Activated naive CD4-positive, alpha-beta T cell treated with anti-CD3 and anti-CD28 coated beads for 36 hours (primary cell): ENCODE measurements at regions of chr2 and their contacts with region 1.

Region 1: GRCh38 chr2:162318328-162319180 is at the start of gene IFIH1:
- DNase-seq: peak; percentile 88
- H3K4me3 Mint-ChIP-seq: peak within 1 kb of the TSS; percentile 94
- H3K27ac Mint-ChIP-seq: peak within 1 kb of the TSS; percentile 98
- H3K4me1 Mint-ChIP-seq: peaks cover 52% of the 10 kb centered on the region
- H3K27me3 Mint-ChIP-seq: no peaks in the 10 kb centered on the region
- total RNA-seq, gene IFIH1: 33.8 to 34.6 TPM

Region 2: DNA sequence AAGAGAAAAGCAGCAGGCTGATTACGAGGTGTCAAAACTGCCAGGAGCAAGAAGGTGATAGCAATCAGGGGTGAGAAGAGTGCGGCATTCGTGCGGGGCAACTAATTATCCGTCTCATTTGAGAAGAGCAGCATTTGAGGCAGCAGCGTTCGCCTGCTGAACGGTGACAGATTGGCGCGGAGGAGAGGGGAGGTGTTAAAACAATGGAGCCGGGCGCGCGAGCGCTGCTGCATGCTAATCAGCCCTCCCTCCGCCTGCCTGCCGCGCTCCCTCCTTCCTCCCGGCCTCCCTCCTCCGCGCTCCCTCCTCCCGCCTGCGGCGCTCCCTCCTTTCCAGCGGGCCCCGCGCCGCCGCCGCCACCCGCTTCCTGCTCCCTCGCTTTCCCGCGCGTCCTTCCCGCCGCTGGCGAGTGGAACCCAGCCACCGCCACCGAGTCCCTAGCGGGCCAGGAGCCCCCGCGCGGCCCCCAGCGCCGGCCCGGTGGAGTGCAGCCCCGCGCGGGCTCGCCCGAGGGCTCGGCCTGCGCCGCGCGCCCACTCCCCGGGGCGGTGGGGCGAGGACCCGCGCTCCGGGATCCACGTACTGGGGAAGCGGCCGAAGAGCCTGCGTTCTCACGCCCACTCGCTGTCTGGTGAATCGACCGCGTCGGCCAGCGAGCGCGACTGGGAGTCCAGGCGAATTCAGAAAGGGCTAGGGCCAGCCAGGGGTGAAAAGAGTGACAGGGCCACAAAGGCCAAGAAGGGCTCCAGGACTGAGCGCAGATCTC is 1079.8 kb before region 1 on chr2:
- CTCF ChIA-PET with region 1: no interaction called
- intact Hi-C with region 1: loop called (anchors 5 kb)
- DNase-seq: peak; percentile 71
- H3K4me3 Mint-ChIP-seq: peak overlapping the region; percentile 84
- H3K27ac Mint-ChIP-seq: peak overlapping the region; percentile 47
- H3K4me1 Mint-ChIP-seq: peaks cover 47% of the 10 kb centered on the region
- H3K27me3 Mint-ChIP-seq: no peaks in the 10 kb centered on the region

Region 3: DNA sequence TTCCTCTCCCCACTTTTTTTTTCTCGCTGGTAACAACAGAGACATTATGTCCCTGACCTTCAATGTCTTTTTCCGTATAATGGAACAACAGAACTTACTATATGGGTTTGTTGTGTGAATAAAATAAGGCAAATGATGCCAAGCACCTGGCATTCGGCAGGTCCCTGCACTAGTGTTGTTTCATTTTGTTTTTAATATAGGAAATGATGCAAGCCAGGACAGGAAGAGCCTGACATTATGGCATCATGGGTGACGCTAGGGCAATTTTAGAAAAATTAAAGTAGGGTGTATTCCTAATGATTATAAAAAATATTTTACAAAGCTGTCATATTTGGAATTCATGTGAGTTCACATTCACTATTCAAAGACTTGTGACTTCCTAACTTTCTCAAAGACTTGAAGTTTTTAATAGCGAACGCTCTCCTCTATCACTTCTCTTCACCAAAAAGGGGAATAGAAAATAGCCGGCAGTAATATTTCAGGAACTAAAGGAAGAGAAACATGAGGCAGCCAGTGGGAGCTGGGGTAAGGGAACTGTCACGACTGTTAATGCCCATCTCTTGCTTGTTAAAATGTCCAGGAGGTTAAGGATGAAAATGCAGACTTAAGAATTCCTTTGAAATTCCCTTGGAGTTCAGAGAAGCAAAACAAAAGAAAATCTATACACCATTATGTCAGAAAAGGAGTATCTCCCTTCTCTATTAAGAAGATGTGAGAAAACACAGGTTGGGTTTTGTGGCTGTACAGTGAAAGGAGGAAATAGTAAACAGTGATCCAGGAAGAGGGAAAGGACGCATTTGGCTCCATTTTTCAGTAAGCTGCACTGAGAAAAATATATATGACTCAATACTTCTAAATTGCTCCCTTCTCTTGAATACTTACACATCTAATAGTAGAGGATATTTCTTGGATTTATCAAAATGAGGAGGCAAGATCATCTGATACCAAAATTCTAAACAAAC is 304.8 kb before region 1 on chr2:
- CTCF ChIA-PET with region 1: no interaction called
- intact Hi-C with region 1: loop called (anchors 5 kb)
- DNase-seq: peak; percentile 31
- H3K4me3 Mint-ChIP-seq: peak overlapping the region; percentile 70
- H3K27ac Mint-ChIP-seq: peak overlapping the region; percentile 95
- H3K4me1 Mint-ChIP-seq: peaks cover 63% of the 10 kb centered on the region
- H3K27me3 Mint-ChIP-seq: no peaks in the 10 kb centered on the region

Region 4: DNA sequence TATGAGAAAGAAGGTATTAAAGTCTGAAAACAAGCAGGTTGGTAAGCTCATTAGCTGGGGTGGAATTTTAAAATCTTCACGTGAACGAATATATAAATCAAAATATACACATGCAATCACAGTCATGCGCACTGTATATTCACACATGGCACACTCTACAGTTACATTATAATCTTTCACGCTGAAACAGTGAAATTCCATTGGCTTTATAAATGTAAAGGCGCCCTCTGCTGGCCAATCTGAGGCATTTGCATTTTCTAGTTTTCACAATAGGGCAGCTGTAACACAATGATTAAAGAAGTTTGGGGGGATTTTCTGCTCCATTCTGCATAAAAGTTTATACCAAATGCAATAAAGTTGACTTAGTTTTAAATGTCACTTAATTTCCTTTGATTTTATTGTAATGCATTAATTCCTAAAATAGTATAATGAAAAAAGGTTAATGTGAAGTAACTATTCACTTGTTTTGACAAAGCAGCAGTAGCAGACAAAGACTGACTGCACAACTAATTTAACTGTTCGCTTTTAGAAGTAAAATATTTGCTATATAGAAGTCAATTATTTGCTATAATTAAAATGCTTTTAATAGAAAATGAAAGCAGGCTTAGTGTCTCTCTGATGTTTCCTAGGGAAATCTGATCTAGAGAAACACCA is 17.3 kb before region 1 on chr2:
- CTCF ChIA-PET with region 1: interaction called, 10 read pairs
- intact Hi-C with region 1: loop called (anchors 1 kb)
- DNase-seq: peak; percentile 71
- H3K4me3 Mint-ChIP-seq: no peak overlapping the region
- H3K27ac Mint-ChIP-seq: no peak overlapping the region
- H3K4me1 Mint-ChIP-seq: no peaks in the 10 kb centered on the region
- H3K27me3 Mint-ChIP-seq: no peaks in the 10 kb centered on the region

Region 5: DNA sequence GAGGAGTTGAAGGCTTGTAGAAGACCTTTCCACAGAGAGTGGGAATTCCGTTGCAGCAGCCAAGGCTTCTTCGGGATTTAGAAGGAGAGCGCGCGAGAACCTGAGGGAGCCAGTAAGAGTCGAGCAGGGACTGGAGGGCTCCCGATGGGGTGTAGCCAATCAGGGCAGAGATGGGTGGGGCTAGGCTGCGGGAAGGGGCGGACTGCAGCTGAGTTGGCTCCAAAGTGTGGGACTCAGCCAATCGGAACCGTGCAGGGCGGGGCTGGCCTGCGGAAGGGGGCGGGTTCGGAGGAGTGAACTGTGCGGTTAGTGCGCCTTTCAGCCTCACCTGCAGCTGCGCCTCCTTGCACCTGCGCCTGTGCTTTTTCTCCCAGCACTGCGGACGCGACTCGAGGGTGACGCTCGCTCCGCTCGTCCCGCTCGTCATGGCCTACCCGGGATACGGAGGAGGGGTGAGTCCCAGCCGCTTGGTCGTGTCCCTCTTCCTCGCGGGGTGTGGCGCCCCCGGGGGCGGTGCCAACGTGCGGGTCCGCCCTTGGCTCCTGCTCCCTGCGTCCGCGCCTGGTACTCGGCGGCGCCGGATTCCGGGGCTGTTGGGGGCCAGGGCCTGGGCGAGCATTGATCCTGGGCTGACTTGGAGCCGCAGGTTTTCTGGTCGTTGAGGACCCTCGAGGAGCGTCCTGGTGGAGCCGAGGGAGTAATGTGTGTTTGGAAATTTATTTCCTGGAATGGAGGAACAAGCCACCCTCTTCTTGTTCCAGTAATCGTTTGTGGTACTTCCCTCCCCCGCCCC is 25.5 kb after region 1 on chr2 and contains the start of gene GCA:
- CTCF ChIA-PET with region 1: interaction called, 3 read pairs
- intact Hi-C with region 1: loop called (anchors 1 kb)
- DNase-seq: peak; percentile 99
- H3K4me3 Mint-ChIP-seq: peak within 1 kb of the TSS; percentile 87
- H3K27ac Mint-ChIP-seq: peak within 1 kb of the TSS; percentile 72
- H3K4me1 Mint-ChIP-seq: peaks cover 12% of the 10 kb centered on the region
- H3K27me3 Mint-ChIP-seq: no peaks in the 10 kb centered on the region
- total RNA-seq, gene GCA: 36.7 to 40.2 TPM